ENCODE measurements at regions of chr5 and their contacts with region 1.

Region 1: DNA sequence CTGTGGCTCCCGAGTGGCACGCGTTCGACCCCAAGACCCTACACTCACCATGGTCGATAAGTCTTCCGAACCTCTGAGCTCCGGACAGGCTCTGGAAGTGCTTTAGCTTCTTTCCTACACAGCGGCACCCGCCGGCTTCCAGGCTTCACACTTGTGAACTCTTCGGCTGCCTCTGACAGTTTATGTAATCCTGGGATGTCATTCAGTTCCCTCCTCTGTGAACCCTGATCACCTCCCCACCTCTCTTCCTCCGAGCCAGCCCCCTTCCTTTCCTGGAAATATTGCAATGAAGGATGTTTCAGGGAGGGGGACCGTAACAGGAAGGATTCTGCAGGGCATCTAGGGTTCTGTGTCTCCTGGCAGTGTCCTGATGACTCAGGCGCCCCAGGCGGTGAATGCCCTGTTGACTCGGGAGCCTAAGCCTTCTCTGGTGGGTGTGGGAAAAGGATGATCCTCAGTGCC is at the start of gene CD14:
- DNase-seq: no peak
- CTCF ChIP-seq: no peak

Region 2: GRCh38 chr5:140575309-140575708 is 57.7 kb before region 1 on chr5:
- CTCF ChIA-PET with region 1: interaction called, 10 read pairs
- POLR2A ChIA-PET with region 1: no interaction called
- DNase-seq: no peak
- CTCF ChIP-seq: no peak

Measured in GM10248 (cell line).